ENCODE measurements at regions of chr1 and their contacts with region 1.

Region 1: GRCh38 chr1:150552093-150552691 is 3.0 kb downstream of the ADAMTSL4 start:
- DNase-seq: peak; percentile 56
- H3K4me3 ChIP-seq: no peak overlapping the region
- H3K27ac ChIP-seq: peak overlapping the region; percentile 57 to 61
- H3K4me1 ChIP-seq: no peaks in the 10 kb centered on the region
- H3K27me3 ChIP-seq: no peaks in the 10 kb centered on the region
- CTCF ChIP-seq: no peak
- POLR2A ChIP-seq: peak; percentile 60

Region 2: GRCh38 chr1:150363426-150364230 is 188.6 kb before region 1 on chr1 and contains the start of gene RPRD2:
- intact Hi-C with region 1: loop called (anchors 10 kb)
- DNase-seq: peak; percentile 99
- H3K4me3 ChIP-seq: peak within 1 kb of the TSS; percentile 70 to 75
- H3K27ac ChIP-seq: peak within 1 kb of the TSS; percentile 87 to 98
- H3K4me1 ChIP-seq: no peaks in the 10 kb centered on the region
- H3K27me3 ChIP-seq: no peaks in the 10 kb centered on the region
- CTCF ChIP-seq: no peak
- POLR2A ChIP-seq: peak; percentile 37
- total RNA-seq, gene RPRD2: 20.6 to 31.4 TPM

Region 3: DNA sequence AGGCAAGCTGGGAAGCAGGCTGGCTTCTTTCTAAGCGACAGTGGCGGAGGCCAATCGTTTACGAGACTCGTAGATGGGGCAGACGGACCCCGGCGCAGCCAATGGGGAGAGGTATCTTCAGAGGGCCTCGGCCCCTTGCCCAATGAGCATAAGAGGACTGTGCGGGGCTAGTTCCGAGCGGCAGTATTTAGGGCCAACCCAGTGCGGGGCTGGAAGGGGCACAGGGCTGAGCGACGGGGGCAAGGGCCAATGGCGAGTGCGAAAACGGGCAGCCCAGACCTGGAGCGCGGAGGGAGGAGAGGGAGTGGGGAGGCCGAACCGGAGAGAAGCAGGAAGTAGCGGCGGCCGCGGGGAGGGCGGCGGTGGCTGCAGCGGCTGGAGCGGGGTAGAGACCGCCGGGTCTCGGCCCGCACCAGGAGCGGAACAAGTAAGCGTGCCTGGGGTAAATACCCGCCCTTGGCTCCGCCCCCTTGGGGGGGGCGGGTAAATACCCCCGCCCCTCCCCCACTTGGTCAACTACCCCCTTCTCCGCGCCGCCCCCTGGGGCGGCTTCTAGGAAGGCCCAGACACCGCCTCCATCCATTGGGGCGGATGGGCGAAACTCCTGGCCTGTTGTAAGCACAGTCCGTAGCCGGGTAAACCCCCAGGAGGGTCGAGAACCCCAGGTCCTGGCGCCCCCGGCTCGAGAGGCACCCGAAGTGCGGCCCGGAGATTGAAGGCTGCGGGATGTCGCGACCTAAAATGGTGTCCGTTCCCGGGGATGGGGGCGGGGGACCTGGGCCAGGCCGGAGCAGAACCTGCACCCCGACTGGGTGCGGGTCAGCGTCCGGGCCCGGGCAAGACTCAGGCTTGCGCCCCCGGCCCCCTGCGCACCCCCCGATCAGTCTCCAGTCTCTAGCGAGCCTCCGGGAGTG is 730.0 kb after region 1 on chr1 and contains the start of gene ZNF687:
- intact Hi-C with region 1: no loop called
- DNase-seq: peak; percentile 100
- H3K4me3 ChIP-seq: peak within 1 kb of the TSS; percentile 68 to 73
- H3K27ac ChIP-seq: peak within 1 kb of the TSS; percentile 98 to 99
- H3K4me1 ChIP-seq: no peaks in the 10 kb centered on the region
- H3K27me3 ChIP-seq: no peaks in the 10 kb centered on the region
- CTCF ChIP-seq: no peak
- POLR2A ChIP-seq: peak; percentile 71
- total RNA-seq, gene ZNF687: 30.1 to 46.4 TPM